Common myeloid progenitor, CD34-positive (primary cell): ENCODE measurements at regions of chr16 and their contacts with region 1.

Region 1: GRCh38 chr16:89615596-89616090 is 2.2 kb downstream of the DPEP1 start:
- DNase-seq: peak in 2 of 3 donors; percentile 28 to 32
- H3K4me3 ChIP-seq: no peak overlapping the region
- H3K27ac ChIP-seq: no peak overlapping the region
- H3K4me1 ChIP-seq: peaks cover 0 to 16% (median 10%) of the 10 kb centered on the region in 4 experiments
- H3K27me3 ChIP-seq: no peaks in the 10 kb centered on the region

Region 2: DNA sequence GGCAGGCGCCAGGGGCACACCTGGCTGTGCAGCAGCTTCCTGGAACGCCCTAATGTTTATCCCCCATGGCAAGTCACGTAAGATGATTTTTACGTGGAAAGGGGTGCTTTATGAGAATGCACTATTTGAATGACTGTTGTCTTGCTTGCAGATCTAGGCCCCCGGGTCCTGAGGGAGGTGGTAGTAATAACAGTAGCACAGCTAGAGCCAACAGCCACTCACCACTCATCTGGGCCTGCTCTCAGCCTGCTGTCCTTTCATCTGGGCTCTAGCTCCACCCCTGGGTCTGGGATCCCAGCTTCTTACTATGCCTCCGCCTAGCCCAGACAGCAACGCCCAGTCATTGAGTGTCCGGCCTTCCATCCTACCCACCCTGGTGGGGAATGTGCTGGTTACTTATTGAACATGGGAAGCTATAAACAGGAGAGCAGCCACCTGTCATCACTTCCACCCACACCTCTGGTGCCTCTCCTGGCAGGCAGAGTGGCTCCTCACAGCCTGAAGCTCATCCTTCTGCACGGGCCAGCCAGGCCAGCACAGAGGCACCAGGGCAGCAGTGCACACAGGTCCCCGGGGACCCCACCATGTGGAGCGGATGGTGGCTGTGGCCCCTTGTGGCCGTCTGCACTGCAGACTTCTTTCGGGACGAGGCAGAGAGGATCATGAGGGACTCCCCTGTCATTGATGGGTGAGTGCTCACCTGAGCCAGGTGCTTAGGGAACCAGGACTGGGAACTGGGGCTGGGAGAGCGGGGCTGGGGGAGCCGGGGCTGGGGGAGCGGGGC is 14.4 kb after region 1 on chr16:
- CTCF ChIA-PET with region 1: interaction called, 11 read pairs
- POLR2A ChIA-PET with region 1: no interaction called
- DNase-seq: no peak
- H3K4me3 ChIP-seq: no peak overlapping the region
- H3K27ac ChIP-seq: no peak overlapping the region
- H3K4me1 ChIP-seq: no peaks in the 10 kb centered on the region
- H3K27me3 ChIP-seq: peaks cover 0 to 6% (median 0%) of the 10 kb centered on the region in 5 experiments